CD4-positive, alpha-beta T cell (primary cell): ENCODE measurements at regions of chr11 and their contacts with region 1.

Region 1: GRCh38 chr11:18105802-18106574 is at the start of gene SAAL1:
- DNase-seq: peak; percentile 81 to 93 (median 87)
- ATAC-seq: peak; percentile 99
- H3K4me3 ChIP-seq: peak within 1 kb of the TSS; percentile 98
- H3K4me3 Mint-ChIP-seq: peak within 1 kb of the TSS; percentile 98
- H3K27ac ChIP-seq: peak within 1 kb of the TSS; percentile 32 to 43
- H3K27ac Mint-ChIP-seq: peak within 1 kb of the TSS; percentile 81
- H3K4me1 ChIP-seq: peaks cover 17% of the 10 kb centered on the region
- H3K4me1 Mint-ChIP-seq: peaks cover 53% of the 10 kb centered on the region
- H3K27me3 ChIP-seq: no peaks in the 10 kb centered on the region
- H3K27me3 Mint-ChIP-seq: peaks cover 13% of the 10 kb centered on the region
- CTCF ChIP-seq: peak; percentile 89
- total RNA-seq, gene SAAL1: 21.3 to 24.5 TPM

Region 2: GRCh38 chr11:17991783-17992433 is 114.1 kb before region 1 on chr11:
- CTCF ChIA-PET with region 1: interaction called, 9 read pairs
- POLR2A ChIA-PET with region 1: no interaction called
- intact Hi-C with region 1: loop called (anchors 1 kb)
- DNase-seq: peak in 13 of 14 experiments; percentile 15 to 71 (median 35)
- ATAC-seq: peak; percentile 88
- H3K4me3 ChIP-seq: no peak overlapping the region
- H3K4me3 Mint-ChIP-seq: no peak overlapping the region
- H3K27ac ChIP-seq: no peak overlapping the region
- H3K27ac Mint-ChIP-seq: no peak overlapping the region
- H3K4me1 ChIP-seq: no peaks in the 10 kb centered on the region
- H3K4me1 Mint-ChIP-seq: no peaks in the 10 kb centered on the region
- H3K27me3 ChIP-seq: no peaks in the 10 kb centered on the region
- H3K27me3 Mint-ChIP-seq: no peaks in the 10 kb centered on the region
- CTCF ChIP-seq: peak; percentile 88